GM12878 (cell line): ENCODE measurements at regions of chr14 and their contacts with region 1.

Region 1: GRCh38 chr14:59126710-59127432 is 61.6 kb upstream of the DAAM1 start:
- DNase-seq: no peak
- ATAC-seq: peak; percentile 92
- H3K4me3 ChIP-seq: no peak overlapping the region
- H3K27ac ChIP-seq: no peak overlapping the region
- H3K4me1 ChIP-seq: no peaks in the 10 kb centered on the region
- H3K27me3 ChIP-seq: no peaks in the 10 kb centered on the region
- CTCF ChIP-seq: peak; percentile 64 to 87 (median 64)
- EP300 ChIP-seq: no peak
- POLR2A ChIP-seq: no peak
- RAD21 ChIP-seq: peak; percentile 94

Region 2: GRCh38 chr14:59028476-59029202 is 98.2 kb before region 1 on chr14:
- CTCF ChIA-PET with region 1: interaction called, 41 read pairs
- POLR2A ChIA-PET with region 1: no interaction called
- RAD21 ChIA-PET with region 1: interaction called, 12 read pairs
- SMC1A ChIA-PET with region 1: interaction called, 39 read pairs
- in situ Hi-C with region 1: no loop called
- intact Hi-C with region 1: loop called (anchors 2 kb)
- DNase-seq: peak; percentile 31
- ATAC-seq: peak; percentile 100
- H3K4me3 ChIP-seq: no peak overlapping the region
- H3K27ac ChIP-seq: no peak overlapping the region
- H3K4me1 ChIP-seq: no peaks in the 10 kb centered on the region
- H3K27me3 ChIP-seq: no peaks in the 10 kb centered on the region
- CTCF ChIP-seq: peak; percentile 88 to 94 (median 91)
- EP300 ChIP-seq: no peak
- POLR2A ChIP-seq: no peak
- RAD21 ChIP-seq: peak; percentile 85

Region 3: DNA sequence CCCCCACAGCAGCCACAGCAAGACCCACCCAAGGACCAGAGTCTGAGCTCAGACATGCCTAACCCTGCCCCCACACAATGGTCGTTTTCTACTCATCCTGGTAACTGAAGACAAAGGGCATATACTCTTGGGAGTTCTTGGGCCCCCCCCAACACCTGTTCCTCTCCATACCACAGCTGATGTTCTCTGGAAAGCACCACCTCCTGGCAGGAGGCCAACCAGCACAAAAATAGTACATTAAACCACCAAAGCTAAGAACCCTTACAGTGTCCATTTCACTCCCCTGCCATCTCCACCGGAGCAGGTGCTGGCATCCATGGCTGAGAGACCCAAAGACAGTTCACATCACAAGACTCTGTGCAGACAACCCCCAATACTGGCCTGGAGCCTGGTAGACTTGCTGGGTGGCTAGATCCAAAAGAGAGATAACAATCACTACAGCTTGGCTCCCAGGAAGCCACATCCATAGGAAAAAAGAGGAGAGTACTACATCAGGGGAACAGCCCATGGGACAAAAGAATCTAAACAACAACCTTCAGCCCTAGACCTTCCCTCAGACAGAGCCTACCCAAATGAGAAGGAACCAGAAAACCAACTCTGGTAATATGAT is 18.9 kb before region 1 on chr14:
- CTCF ChIA-PET with region 1: interaction called, 13 read pairs
- POLR2A ChIA-PET with region 1: no interaction called
- RAD21 ChIA-PET with region 1: interaction called, 4 read pairs
- SMC1A ChIA-PET with region 1: interaction called, 24 read pairs
- in situ Hi-C with region 1: no loop called
- intact Hi-C with region 1: no loop called
- DNase-seq: no peak
- ATAC-seq: peak; percentile 60
- H3K4me3 ChIP-seq: no peak overlapping the region
- H3K27ac ChIP-seq: no peak overlapping the region
- H3K4me1 ChIP-seq: no peaks in the 10 kb centered on the region
- H3K27me3 ChIP-seq: no peaks in the 10 kb centered on the region
- CTCF ChIP-seq: no peak
- EP300 ChIP-seq: no peak; a peak in 1 of 4 replicates
- POLR2A ChIP-seq: no peak
- RAD21 ChIP-seq: no peak

Region 4: DNA sequence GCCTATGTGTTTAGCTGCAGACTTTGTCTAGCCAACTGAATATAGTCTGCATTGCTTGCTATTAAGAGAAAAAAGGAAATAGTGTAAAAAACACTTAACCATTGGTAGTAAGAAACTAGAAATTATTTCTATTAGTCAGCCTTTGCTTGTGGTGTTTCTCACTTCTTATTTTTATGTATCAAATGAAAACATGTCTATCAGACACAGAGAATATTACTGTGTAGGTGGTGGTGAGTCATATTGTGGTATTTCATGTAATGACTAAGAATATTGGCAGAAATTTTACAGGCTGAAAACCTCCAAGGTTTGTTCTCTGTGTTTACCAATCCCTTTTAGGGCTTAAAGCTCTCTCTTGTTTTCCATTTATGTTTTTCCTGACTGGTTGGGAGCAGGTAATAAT is 148.8 kb after region 1 on chr14:
- CTCF ChIA-PET with region 1: interaction called, 8 read pairs
- POLR2A ChIA-PET with region 1: no interaction called
- RAD21 ChIA-PET with region 1: interaction called, 11 read pairs
- SMC1A ChIA-PET with region 1: interaction called, 10 read pairs
- in situ Hi-C with region 1: no loop called
- intact Hi-C with region 1: no loop called
- DNase-seq: peak; percentile 78
- ATAC-seq: peak; percentile 87
- H3K4me3 ChIP-seq: no peak overlapping the region
- H3K27ac ChIP-seq: peak overlapping the region; percentile 40; the same call in 1 of the 2 replicates
- H3K4me1 ChIP-seq: peaks cover 21% of the 10 kb centered on the region
- H3K27me3 ChIP-seq: no peaks in the 10 kb centered on the region
- CTCF ChIP-seq: no peak
- EP300 ChIP-seq: peak; percentile 88 to 96
- POLR2A ChIP-seq: no peak
- RAD21 ChIP-seq: no peak

Region 5: DNA sequence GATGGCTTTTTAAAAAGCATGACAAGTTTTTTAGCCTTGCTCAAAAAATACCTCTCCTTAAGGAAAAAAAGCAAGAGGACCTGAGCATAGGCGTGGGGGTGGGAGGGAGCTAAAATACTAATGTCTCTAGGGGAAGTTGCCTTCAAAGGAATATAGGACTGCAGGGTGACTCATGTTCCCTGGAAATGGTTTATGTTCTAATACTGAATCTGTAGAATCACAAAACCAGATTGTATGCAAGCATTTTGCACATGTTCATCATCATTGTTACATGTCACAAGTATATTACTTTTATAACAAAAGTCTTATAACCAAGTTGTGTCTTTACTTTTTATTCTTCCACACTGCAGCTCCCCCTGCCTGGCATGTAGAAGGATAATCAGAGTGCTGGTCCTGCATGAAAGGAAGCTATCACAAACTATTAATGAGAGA is 301.7 kb after region 1 on chr14:
- CTCF ChIA-PET with region 1: interaction called, 20 read pairs
- POLR2A ChIA-PET with region 1: no interaction called
- RAD21 ChIA-PET with region 1: interaction called, 10 read pairs
- SMC1A ChIA-PET with region 1: interaction called, 7 read pairs
- in situ Hi-C with region 1: no loop called
- intact Hi-C with region 1: no loop called
- DNase-seq: no peak
- ATAC-seq: no peak
- H3K4me3 ChIP-seq: no peak overlapping the region
- H3K27ac ChIP-seq: no peak overlapping the region
- H3K4me1 ChIP-seq: no peaks in the 10 kb centered on the region
- H3K27me3 ChIP-seq: no peaks in the 10 kb centered on the region
- CTCF ChIP-seq: no peak; a peak in 1 of 6 replicates
- EP300 ChIP-seq: no peak
- POLR2A ChIP-seq: no peak
- RAD21 ChIP-seq: peak; percentile 30; the same call in 1 of the 2 replicates